Transverse colon (tissue), 4 donors: ENCODE measurements at regions of chr11 and their contacts with region 1.

Region 1: DNA sequence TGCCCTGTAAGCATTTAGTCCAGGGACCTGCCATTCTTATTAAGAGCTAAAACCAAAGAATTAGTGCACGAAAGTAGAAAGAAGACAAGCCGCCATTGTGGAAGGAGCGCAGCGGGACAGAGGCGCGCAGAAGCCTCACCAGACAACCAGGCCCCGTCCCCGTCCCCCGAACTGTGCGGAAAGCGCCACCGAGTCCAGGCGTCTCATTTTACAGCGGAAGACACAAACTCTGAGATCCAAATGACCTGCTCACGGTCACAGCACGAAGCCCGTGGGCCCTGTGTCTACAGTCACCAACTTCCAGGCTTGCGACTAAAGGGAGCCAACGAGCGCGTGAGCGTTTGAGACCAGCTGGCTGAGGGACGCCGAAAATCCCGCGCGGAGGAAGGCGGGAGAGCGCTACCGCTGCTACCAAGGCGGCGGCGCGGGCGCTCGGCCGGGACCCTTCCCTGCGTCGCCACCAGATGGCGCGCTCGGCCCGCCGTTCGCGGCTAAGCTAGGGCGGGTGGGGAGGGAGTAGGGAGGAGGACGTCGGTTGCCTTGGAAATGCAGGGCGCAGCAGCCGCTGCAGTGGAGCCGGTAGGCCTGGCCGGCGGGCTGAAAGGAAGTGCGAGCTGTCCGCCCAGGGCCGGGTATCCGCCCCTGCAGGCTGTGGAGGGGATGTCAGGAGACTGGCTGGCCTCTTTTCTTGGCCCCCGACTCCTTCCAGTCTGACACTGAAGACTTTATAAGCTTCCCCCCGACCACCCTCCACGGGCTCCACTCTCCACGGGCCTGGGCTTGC is 434 bp upstream of the CCDC83 start:
- DNase-seq: peak; percentile 93
- H3K4me3 ChIP-seq: peak overlapping the region; percentile 23 to 72 (median 44)
- H3K27ac ChIP-seq: peak overlapping the region; percentile 81 to 91 (median 88)
- H3K4me1 ChIP-seq: peaks cover 0 to 12% (median 8%) of the 10 kb centered on the region in 4 donors
- H3K27me3 ChIP-seq: no peaks in the 10 kb centered on the region
- CTCF ChIP-seq: peak; percentile 72 to 98 (median 94)
- EP300 ChIP-seq: no peak
- POLR2A ChIP-seq: peak; percentile 40

Region 2: GRCh38 chr11:84691830-84692229 is 1162.9 kb before region 1 on chr11:
- in situ Hi-C with region 1: no loop called
- intact Hi-C with region 1: no loop called
- DNase-seq: no peak
- H3K4me3 ChIP-seq: no peak overlapping the region
- H3K27ac ChIP-seq: no peak overlapping the region
- H3K4me1 ChIP-seq: no peaks in the 10 kb centered on the region
- H3K27me3 ChIP-seq: no peaks in the 10 kb centered on the region
- CTCF ChIP-seq: no peak
- EP300 ChIP-seq: no peak
- POLR2A ChIP-seq: no peak

Region 3: GRCh38 chr11:85582111-85582510 is 272.6 kb before region 1 on chr11:
- in situ Hi-C with region 1: no loop called
- intact Hi-C with region 1: no loop called
- DNase-seq: no peak
- H3K4me3 ChIP-seq: no peak overlapping the region
- H3K27ac ChIP-seq: no peak overlapping the region
- H3K4me1 ChIP-seq: no peaks in the 10 kb centered on the region
- H3K27me3 ChIP-seq: no peaks in the 10 kb centered on the region
- CTCF ChIP-seq: no peak
- EP300 ChIP-seq: no peak
- POLR2A ChIP-seq: no peak

Region 4: DNA sequence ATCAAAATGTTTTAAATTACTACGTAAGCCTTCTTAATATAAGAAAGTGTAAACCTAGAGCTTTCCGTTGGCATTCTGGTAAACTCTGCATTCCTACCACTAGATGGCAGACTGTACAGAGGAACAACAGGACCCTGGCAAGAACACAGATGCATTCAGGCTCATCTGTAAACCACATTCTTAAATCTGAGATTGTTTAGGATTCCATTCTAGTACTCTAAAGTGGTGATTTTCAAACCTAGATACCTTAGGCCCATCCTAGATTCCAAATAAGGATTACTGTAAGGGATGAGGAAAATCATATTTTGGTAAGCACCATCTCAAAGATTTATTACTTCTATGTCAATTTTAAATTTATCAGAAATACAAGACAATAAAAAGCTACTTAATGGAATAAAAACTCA is 187.2 kb after region 1 on chr11:
- in situ Hi-C with region 1: loop called in 1 of 4 experiments (anchors 25 kb)
- intact Hi-C with region 1: no loop called
- DNase-seq: peak; percentile 66
- H3K4me3 ChIP-seq: no peak overlapping the region
- H3K27ac ChIP-seq: peak overlapping the region; percentile 37 to 66 (median 53)
- H3K4me1 ChIP-seq: peaks cover 11 to 57% (median 38%) of the 10 kb centered on the region in 4 donors
- H3K27me3 ChIP-seq: no peaks in the 10 kb centered on the region
- CTCF ChIP-seq: peak; percentile 85 to 97 (median 93)
- EP300 ChIP-seq: no peak
- POLR2A ChIP-seq: no peak

Region 5: GRCh38 chr11:86218125-86219084 is 363.7 kb after region 1 on chr11:
- in situ Hi-C with region 1: loop called (anchors 10 to 25 kb)
- intact Hi-C with region 1: loop called (anchors 10 kb)
- DNase-seq: peak; percentile 75
- H3K4me3 ChIP-seq: peak overlapping the region in 1 of 4 donors; percentile 10
- H3K27ac ChIP-seq: no peak overlapping the region
- H3K4me1 ChIP-seq: peaks cover 0 to 11% (median 5%) of the 10 kb centered on the region in 4 donors
- H3K27me3 ChIP-seq: no peaks in the 10 kb centered on the region
- CTCF ChIP-seq: peak; percentile 79 to 89 (median 82)
- EP300 ChIP-seq: no peak
- POLR2A ChIP-seq: no peak